Posterior vena cava (tissue), 2 donors: ENCODE measurements at regions of chr22 and their contacts with region 1.

Region 1: GRCh38 chr22:31272522-31273446 is 19.5 kb downstream of the PIK3IP1 start:
- DNase-seq: no peak

Region 2: DNA sequence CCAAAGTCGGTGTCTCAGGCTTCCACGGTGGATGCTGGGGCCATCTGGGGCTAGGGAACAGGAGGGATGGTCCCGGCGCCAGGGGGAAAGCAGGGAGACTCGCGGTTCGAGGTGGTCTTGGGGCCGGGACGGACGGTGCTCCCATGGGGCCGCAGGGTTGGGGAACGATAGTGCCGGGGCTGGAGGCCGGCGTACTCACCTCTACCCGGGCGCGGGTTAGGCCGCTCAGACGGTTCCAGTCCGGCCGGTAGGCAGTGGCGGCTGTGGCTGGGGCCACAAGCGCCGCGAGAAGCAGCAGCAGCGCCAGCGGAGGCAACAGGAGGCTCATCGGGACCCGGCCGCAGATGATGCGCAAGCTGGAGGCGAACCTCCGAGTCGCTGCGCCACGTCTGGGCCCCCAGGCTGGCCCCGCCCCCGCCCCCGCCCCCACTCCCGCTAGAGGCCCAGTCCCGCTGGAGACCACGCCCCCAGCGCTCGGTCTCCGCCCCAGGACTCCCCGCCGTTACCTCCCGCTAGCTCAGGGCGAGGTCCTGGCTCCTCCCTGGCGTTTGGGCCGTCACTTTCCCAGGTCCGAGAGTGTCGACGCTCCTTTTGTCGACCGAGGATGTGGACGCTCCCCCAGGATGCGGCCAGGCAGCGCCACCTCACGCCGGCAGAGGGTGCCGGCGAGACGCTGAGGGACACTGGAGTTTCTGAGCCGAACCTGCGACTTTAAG is 165.4 kb before region 1 on chr22 and contains the start of gene SELENOM:
- intact Hi-C with region 1: loop called in 1 of 2 experiments (anchors 5 kb)
- DNase-seq: peak; percentile 99
- total RNA-seq, gene SELENOM: 535 to 575 TPM

Region 3: GRCh38 chr22:31211862-31212730 is 60.7 kb before region 1 on chr22 and contains the start of gene LIMK2:
- intact Hi-C with region 1: loop called in 1 of 2 experiments (anchors 5 kb)
- DNase-seq: peak; percentile 98
- total RNA-seq, gene LIMK2: 24.6 to 26.8 TPM

Region 4: DNA sequence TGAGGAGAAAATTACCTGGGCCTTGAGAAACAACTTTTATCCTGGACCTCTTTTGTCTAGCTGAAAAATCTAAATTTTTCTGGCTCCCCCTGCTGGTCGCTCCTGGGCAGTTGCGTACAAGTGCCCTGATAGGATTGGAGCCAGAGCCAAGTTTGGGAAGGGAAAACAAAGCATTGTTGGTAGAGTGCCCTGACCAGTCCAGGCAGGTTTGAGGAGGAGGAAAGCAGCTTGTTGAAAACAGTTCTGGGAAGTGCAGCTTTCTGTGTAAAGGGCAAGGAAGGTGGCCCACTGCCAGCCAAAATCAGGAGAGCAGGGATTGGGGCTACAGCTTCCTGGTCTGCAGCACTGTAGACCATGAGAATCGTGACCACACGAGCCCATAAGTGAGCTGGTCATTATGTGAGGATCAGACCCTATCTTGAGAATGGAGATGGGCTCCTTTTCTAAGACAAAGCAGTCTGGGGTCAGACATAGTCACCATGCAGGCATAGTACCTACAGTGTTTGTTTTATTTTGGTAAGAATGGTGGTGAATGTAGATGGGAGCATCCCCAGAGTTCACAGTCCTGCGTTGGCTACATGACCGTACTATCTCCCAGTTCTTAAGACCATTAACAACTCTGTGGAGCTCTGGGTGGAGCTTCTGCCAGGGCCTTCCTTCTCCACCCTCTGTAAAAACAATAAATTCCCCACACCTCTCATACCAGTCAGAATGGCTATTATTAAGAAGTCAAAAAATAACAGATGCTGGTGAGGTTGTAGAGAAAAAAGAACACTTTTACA is 40.8 kb after region 1 on chr22:
- intact Hi-C with region 1: no loop called
- DNase-seq: peak; percentile 86